ENCODE measurements at regions of chr12 and their contacts with region 1.

Region 1: GRCh38 chr12:110698171-110698902 is 9.4 kb upstream of the HVCN1 start:
- DNase-seq: peak; percentile 89
- ATAC-seq: peak; percentile 84

Region 2: DNA sequence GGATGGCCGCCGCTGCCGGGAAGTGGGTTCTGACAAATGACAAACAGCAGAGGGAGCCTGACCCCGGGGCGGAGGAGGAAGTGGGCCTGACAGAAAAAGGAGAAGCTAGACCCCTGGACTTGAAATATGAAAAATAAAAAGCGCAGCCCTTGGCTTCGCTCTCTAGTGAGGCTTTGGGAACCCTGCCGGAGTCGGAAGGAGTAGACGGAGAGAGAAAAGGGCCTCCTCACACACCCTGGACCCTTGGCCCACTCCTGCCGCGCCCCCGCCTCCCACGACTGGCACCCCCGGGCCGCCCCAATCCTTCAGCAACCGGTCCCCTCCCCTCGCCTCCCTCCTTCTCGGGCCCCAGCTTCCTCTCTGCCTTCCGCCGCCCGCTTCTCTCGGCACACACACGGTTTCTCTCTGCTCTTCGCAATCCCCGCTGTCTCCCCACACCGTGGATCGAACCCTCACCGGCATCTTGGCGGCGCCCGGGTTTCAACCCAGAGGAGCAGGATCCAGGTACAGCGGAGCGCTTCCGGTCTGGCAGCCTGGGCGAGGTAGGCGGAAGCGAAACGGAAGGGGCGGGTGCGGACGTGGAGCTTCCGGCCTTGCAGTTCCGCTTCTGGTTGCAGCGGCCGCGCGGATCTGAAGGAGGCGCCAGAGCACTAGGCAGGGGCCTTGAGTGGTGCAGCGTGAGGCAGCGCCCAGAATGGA is 248.4 kb before region 1 on chr12 and contains the start of gene ARPC3:
- intact Hi-C with region 1: loop called (anchors 2 kb)
- DNase-seq: peak; percentile 98
- ATAC-seq: peak; percentile 99
- total RNA-seq, gene ARPC3: 94.4 TPM

Region 3: GRCh38 chr12:110468212-110469048 is 229.9 kb before region 1 on chr12 and contains the starts of genes FAM216A and GPN3:
- intact Hi-C with region 1: loop called (anchors 5 kb)
- DNase-seq: peak; percentile 98
- ATAC-seq: peak; percentile 96
- total RNA-seq, gene FAM216A: 4.8 TPM
- total RNA-seq, gene GPN3: 24.7 TPM

Region 4: GRCh38 chr12:110501752-110502738 is 196.3 kb before region 1 on chr12 and contains the starts of genes RAD9B and VPS29:
- intact Hi-C with region 1: loop called (anchors 5 kb)
- DNase-seq: peak; percentile 99
- ATAC-seq: peak; percentile 99
- total RNA-seq, gene RAD9B: 1.1 TPM
- total RNA-seq, gene VPS29: 106 TPM

Region 5: DNA sequence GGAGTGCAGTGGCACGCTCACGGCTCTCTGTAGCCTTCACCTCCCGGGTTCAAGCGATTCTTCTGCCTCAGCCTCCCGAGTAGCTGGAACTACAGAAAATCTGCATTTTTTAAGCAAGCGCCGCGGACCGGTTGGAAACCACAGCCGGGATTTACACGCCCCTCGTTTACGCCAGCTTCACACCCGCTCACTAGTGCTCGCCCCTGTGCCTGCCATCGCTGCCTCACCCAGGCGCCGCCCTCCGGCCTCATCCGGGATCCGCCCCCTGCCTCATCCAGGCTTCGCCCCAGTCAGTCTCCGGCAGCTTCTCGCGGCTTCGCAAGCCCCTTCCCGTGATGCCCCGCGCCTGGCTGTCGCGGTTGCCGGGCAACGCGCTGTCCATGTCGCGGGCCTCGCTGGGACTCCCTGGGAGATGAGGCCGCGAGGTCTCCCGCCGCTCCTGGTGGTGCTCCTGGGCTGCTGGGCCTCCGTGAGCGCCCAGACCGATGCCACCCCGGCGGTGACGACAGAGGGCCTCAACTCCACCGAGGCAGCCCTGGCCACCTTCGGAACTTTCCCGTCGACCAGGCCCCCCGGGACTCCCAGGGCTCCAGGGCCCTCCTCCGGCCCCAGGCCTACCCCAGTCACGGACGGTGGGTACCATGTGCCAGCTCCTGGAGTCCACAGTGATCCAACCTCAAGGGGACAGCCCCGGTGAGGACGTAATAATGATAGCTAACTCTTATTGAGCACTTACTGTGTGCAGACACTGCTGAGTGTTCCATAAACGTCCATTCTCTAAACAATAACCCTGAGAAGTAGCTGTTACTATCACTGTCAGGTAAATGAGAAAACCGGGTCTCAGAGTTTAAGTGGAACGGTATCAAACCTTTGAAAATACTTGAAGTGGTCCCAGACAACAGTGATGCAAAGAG is 84.3 kb before region 1 on chr12 and contains the start of gene TCTN1:
- intact Hi-C with region 1: loop called (anchors 5 kb)
- DNase-seq: peak; percentile 99
- ATAC-seq: peak; percentile 99
- total RNA-seq, gene TCTN1: 26.9 TPM